Lower lobe of right lung (tissue), 2 donors: ENCODE measurements at regions of chr7 and their contacts with region 1.

Region 1: DNA sequence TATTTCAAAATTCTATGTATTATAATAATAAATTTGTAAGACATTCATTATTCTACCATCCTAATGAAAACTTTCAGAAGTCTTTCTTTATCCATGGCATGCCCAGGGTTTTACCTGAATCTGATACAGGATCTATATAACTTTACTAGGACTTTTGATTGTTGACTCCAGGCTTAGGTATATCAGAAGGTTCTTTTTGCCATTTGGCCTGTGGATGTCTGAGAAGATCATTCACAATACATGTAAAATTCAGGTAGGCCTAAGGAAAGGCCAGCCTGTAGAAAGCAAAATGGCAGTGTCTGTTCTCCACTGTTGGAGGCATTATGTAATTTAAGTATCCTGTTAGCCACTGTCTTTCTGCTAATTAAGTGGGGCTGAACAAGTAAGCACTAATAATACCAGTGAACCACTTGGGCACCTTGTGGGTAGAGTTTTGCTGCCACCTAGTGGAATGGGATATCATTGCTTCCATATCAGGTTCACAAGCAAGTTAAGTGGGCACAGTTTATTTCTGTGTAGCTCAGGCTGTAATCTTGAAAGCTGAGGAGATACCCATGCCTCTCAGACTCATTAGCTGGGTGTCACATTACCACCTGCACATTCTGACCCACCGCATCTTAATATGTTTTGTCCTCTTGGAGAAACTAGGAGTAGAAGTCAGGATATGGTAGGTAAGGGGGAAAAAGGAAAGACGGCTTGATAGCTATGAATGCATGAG is 105.5 kb downstream of the SEPTIN7 start:
- DNase-seq: no peak
- ATAC-seq: peak; percentile 93
- H3K4me3 ChIP-seq: no peak overlapping the region
- H3K27ac ChIP-seq: no peak overlapping the region
- H3K4me1 ChIP-seq: no peaks in the 10 kb centered on the region
- H3K27me3 ChIP-seq: no peaks in the 10 kb centered on the region
- CTCF ChIP-seq: peak; percentile 89

Region 2: GRCh38 chr7:35714862-35715261 is 191.5 kb before region 1 on chr7:
- intact Hi-C with region 1: loop called (anchors 5 kb)
- DNase-seq: no peak
- ATAC-seq: no peak
- H3K4me3 ChIP-seq: no peak overlapping the region
- H3K27ac ChIP-seq: no peak overlapping the region
- H3K4me1 ChIP-seq: peaks cover 10% of the 10 kb centered on the region
- H3K27me3 ChIP-seq: no peaks in the 10 kb centered on the region
- CTCF ChIP-seq: no peak

Region 3: GRCh38 chr7:35805876-35806275 is 100.5 kb before region 1 on chr7:
- intact Hi-C with region 1: no loop called
- DNase-seq: no peak
- ATAC-seq: no peak
- H3K4me3 ChIP-seq: no peak overlapping the region
- H3K27ac ChIP-seq: no peak overlapping the region
- H3K4me1 ChIP-seq: peaks cover 42% of the 10 kb centered on the region
- H3K27me3 ChIP-seq: no peaks in the 10 kb centered on the region
- CTCF ChIP-seq: no peak

Region 4: DNA sequence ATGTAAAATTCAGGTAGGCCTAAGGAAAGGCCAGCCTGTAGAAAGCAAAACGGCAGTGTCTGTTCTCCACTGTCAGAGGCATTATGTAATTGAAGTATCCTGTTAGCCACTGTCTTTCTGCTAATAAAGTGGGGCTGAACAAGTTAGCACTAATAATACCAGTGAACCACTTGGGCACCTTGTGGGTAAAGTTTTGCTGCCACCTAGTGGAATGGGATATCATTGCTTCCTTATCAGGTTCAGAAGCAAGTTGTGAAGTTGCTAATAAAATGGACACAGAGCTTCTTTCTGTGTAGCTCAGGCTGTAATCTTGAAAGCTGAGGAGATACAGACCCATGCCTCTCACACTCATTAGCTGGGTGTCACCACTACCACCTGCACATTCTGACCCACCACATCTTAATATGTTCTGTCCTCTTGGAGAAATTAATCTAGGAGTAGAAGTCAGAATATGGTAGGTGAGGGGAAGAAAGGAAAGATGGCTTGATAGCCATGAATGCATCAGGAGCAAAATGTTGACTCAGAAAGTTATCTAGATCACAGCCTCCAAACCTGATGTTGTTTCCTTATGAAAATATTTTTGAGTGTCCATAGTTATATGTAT is 69.6 kb after region 1 on chr7:
- intact Hi-C with region 1: loop called (anchors 10 kb)
- DNase-seq: no peak
- ATAC-seq: peak; percentile 84 to 87
- H3K4me3 ChIP-seq: no peak overlapping the region
- H3K27ac ChIP-seq: no peak overlapping the region
- H3K4me1 ChIP-seq: no peaks in the 10 kb centered on the region
- H3K27me3 ChIP-seq: no peaks in the 10 kb centered on the region
- CTCF ChIP-seq: peak; percentile 83

Region 5: GRCh38 chr7:36192053-36192824 is 285.9 kb after region 1 on chr7:
- intact Hi-C with region 1: no loop called
- DNase-seq: no peak
- ATAC-seq: peak; percentile 67 to 69
- H3K4me3 ChIP-seq: no peak overlapping the region
- H3K27ac ChIP-seq: no peak overlapping the region
- H3K4me1 ChIP-seq: no peaks in the 10 kb centered on the region
- H3K27me3 ChIP-seq: no peaks in the 10 kb centered on the region
- CTCF ChIP-seq: no peak